Panc1 (cell line): ENCODE measurements at regions of chr7 and their contacts with region 1.

Region 1: GRCh38 chr7:132225216-132226030 is 350.8 kb downstream of the PLXNA4 start:
- DNase-seq: no peak
- ATAC-seq: no peak
- H3K4me3 ChIP-seq: no peak overlapping the region
- H3K27ac ChIP-seq: no peak overlapping the region
- H3K4me1 ChIP-seq: no peaks in the 10 kb centered on the region
- H3K27me3 ChIP-seq: no peaks in the 10 kb centered on the region
- CTCF ChIP-seq: no peak

Region 2: GRCh38 chr7:132257253-132257652 is 31.8 kb after region 1 on chr7:
- CTCF ChIA-PET with region 1: interaction called, 10 read pairs
- POLR2A ChIA-PET with region 1: no interaction called
- in situ Hi-C with region 1: no loop called
- intact Hi-C with region 1: no loop called
- DNase-seq: no peak
- ATAC-seq: no peak
- H3K4me3 ChIP-seq: no peak overlapping the region
- H3K27ac ChIP-seq: no peak overlapping the region
- H3K4me1 ChIP-seq: no peaks in the 10 kb centered on the region
- H3K27me3 ChIP-seq: no peaks in the 10 kb centered on the region; the same call in 1 of the 2 replicates
- CTCF ChIP-seq: no peak